Naive thymus-derived CD4-positive, alpha-beta T cell (primary cell): ENCODE measurements at regions of chr12 and their contacts with region 1.

Region 1: DNA sequence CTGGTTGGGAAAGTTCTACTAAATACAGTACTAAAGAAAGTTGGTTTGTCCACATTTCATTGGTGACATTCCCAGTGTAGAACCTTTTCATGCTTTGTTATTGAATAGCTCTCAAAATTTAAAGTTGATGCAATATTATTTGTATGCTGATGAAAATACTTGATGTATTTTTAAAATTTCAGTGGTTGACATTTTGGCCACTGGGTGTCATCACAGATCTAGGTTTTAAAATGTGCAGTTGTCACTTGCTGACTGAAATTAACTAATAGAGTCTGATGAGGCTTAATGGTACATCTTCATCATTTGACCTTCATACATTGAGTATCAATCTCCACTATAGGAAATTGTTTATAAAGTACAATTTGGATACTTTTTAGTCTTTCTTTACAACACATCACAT is 37.1 kb downstream of the CMAS start:
- DNase-seq: peak in 7 of 9 donors; percentile 18 to 57 (median 47)
- ATAC-seq: peak; percentile 56
- H3K4me3 ChIP-seq: no peak overlapping the region
- H3K4me3 Mint-ChIP-seq: no peak overlapping the region
- H3K27ac ChIP-seq: no peak overlapping the region
- H3K27ac Mint-ChIP-seq: no peak overlapping the region
- H3K4me1 ChIP-seq: no peaks in the 10 kb centered on the region
- H3K4me1 Mint-ChIP-seq: no peaks in the 10 kb centered on the region
- H3K27me3 ChIP-seq: no peaks in the 10 kb centered on the region
- H3K27me3 Mint-ChIP-seq: peaks cover 0 to 9% (median 0%) of the 10 kb centered on the region in 5 donors

Region 2: GRCh38 chr12:21989819-21990412 is 93.3 kb before region 1 on chr12:
- CTCF ChIA-PET with region 1: no interaction called
- POLR2A ChIA-PET with region 1: no interaction called
- intact Hi-C with region 1: no loop called
- DNase-seq: peak in 1 of 9 donors; percentile 4
- ATAC-seq: no peak
- H3K4me3 ChIP-seq: no peak overlapping the region
- H3K4me3 Mint-ChIP-seq: no peak overlapping the region
- H3K27ac ChIP-seq: no peak overlapping the region
- H3K27ac Mint-ChIP-seq: no peak overlapping the region
- H3K4me1 ChIP-seq: no peaks in the 10 kb centered on the region
- H3K4me1 Mint-ChIP-seq: peaks cover 8 to 9% (median 9%) of the 10 kb centered on the region in 7 donors
- H3K27me3 ChIP-seq: peaks cover 0 to 3% of the 10 kb centered on the region in 2 donors
- H3K27me3 Mint-ChIP-seq: peaks cover 4 to 19% (median 16%) of the 10 kb centered on the region in 5 donors

Region 3: GRCh38 chr12:22173177-22173576 is 90.0 kb after region 1 on chr12:
- CTCF ChIA-PET with region 1: no interaction called
- POLR2A ChIA-PET with region 1: no interaction called
- intact Hi-C with region 1: loop called (anchors 1 kb)
- DNase-seq: peak in 2 of 9 donors; percentile 6 to 12
- ATAC-seq: no peak
- H3K4me3 ChIP-seq: no peak overlapping the region
- H3K4me3 Mint-ChIP-seq: no peak overlapping the region
- H3K27ac ChIP-seq: no peak overlapping the region
- H3K27ac Mint-ChIP-seq: no peak overlapping the region
- H3K4me1 ChIP-seq: no peaks in the 10 kb centered on the region
- H3K4me1 Mint-ChIP-seq: peaks cover 2 to 8% (median 6%) of the 10 kb centered on the region in 7 donors
- H3K27me3 ChIP-seq: no peaks in the 10 kb centered on the region
- H3K27me3 Mint-ChIP-seq: peaks cover 0 to 2% (median 0%) of the 10 kb centered on the region in 5 donors